A673 (cell line): ENCODE measurements at regions of chr3 and their contacts with region 1.

Region 1: GRCh38 chr3:156174229-156174847 is 54.0 kb downstream of the KCNAB1 start:
- DNase-seq: peak; percentile 54
- H3K4me3 ChIP-seq: no peak overlapping the region
- H3K27ac ChIP-seq: no peak overlapping the region
- H3K4me1 ChIP-seq: no peaks in the 10 kb centered on the region
- H3K27me3 ChIP-seq: no peaks in the 10 kb centered on the region
- CTCF ChIP-seq: peak; percentile 51

Region 2: GRCh38 chr3:156297582-156297981 is 123.2 kb after region 1 on chr3:
- CTCF ChIA-PET with region 1: interaction called, 14 read pairs
- POLR2A ChIA-PET with region 1: no interaction called
- intact Hi-C with region 1: no loop called
- DNase-seq: no peak
- H3K4me3 ChIP-seq: no peak overlapping the region
- H3K27ac ChIP-seq: no peak overlapping the region
- H3K4me1 ChIP-seq: no peaks in the 10 kb centered on the region
- H3K27me3 ChIP-seq: peaks cover 8% of the 10 kb centered on the region
- CTCF ChIP-seq: no peak

Region 3: GRCh38 chr3:156396851-156397250 is 222.5 kb after region 1 on chr3:
- CTCF ChIA-PET with region 1: no interaction called
- POLR2A ChIA-PET with region 1: no interaction called
- intact Hi-C with region 1: no loop called
- DNase-seq: no peak
- H3K4me3 ChIP-seq: no peak overlapping the region
- H3K27ac ChIP-seq: no peak overlapping the region
- H3K4me1 ChIP-seq: no peaks in the 10 kb centered on the region
- H3K27me3 ChIP-seq: no peaks in the 10 kb centered on the region
- CTCF ChIP-seq: no peak

Region 4: GRCh38 chr3:156509189-156510174 is 335.1 kb after region 1 on chr3:
- CTCF ChIA-PET with region 1: interaction called, 8 read pairs
- POLR2A ChIA-PET with region 1: no interaction called
- intact Hi-C with region 1: loop called (anchors 5 kb)
- DNase-seq: peak; percentile 77
- H3K4me3 ChIP-seq: no peak overlapping the region
- H3K27ac ChIP-seq: no peak overlapping the region
- H3K4me1 ChIP-seq: peaks cover 6% of the 10 kb centered on the region
- H3K27me3 ChIP-seq: no peaks in the 10 kb centered on the region
- CTCF ChIP-seq: peak; percentile 78